Caco-2 (cell line): ENCODE measurements at regions of chr22 and their contacts with region 1.

Region 1: DNA sequence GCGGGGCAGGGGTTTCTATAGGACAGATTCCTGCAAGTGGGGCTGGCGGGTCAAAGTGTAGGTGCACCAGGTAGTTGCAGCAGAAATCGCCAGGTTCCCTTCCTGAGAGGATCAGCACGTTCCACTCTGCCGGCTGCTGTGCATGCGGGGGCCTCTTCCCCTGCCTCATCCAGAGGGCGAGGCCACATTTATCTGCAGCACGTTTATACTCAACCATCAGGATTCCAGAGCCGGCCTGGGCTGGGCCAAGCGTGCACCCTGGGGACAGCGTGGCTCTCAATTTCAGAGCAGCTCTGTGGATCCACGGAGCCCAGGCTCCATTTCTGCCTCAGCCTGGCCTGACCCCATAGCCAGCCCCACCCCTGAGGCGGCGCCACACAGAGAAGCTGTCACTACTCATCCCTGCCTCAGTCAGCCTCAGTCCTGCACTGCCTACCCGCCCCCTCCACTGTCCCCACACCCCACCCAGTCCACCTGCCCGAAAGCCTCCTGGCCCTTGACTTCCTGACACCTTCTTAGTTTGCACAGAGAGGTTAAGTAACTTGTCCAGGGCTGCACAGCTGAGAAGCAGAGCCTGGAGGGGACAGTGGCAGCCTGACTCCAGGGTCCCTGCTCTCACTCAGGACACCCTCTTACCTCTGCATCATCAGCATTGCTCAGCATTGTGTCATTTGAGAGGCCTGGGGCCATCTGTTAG is 45.9 kb upstream of the RTL6 start:
- DNase-seq: peak; percentile 39 to 54
- H3K4me3 ChIP-seq: peak overlapping the region; percentile 22
- H3K4me3 Mint-ChIP-seq: peak overlapping the region; percentile 37
- H3K27ac Mint-ChIP-seq: no peak overlapping the region
- H3K4me1 ChIP-seq: peaks cover 3% of the 10 kb centered on the region; the same call in 1 of the 2 replicates
- H3K4me1 Mint-ChIP-seq: no peaks in the 10 kb centered on the region
- H3K27me3 ChIP-seq: no peaks in the 10 kb centered on the region
- H3K27me3 Mint-ChIP-seq: peaks cover 5% of the 10 kb centered on the region
- CTCF ChIP-seq: no peak

Region 2: DNA sequence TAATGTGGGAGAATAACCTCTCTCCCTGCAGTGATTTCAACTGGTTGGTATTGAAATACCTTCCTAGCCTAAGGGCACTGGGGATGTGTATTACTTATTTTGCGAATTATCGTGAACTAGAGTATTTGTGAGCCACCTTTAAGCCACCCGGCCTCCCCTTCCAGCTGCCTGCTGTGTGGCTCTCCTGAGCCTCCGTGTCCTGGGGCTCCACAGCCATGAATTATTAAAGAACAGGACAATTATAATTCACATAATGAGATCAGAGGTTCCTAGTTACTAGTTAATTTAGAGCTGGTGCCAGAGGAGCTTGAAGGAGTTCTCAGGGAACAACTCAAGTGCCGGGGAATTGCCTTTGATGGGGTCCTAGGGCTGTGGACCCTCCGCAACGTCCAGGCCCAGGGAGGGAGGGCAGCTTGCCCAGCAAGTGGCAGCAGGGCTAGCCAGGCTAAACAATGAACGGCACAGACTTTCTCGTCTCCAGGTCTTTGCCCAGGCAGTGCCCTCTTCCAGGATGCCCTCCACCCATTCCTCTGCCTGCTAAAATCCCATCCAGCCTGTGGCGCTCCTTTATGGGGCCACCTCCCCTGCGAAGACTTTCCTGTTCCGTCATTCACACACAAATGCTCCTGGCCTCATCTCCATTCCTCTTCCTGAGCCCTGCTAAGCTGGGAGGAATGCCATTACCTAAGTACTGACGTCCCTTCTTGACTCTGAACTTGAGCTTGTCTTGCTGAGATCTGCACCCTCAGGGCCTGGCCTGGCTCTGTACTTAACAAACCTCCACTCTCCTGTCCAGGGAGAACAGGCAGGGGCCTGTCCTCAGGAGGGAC is 137.4 kb before region 1 on chr22:
- CTCF ChIA-PET with region 1: no interaction called
- POLR2A ChIA-PET with region 1: no interaction called
- intact Hi-C with region 1: no loop called
- DNase-seq: peak in 1 of 2 experiments; percentile 11
- H3K4me3 ChIP-seq: no peak overlapping the region
- H3K4me3 Mint-ChIP-seq: no peak overlapping the region
- H3K27ac Mint-ChIP-seq: no peak overlapping the region
- H3K4me1 ChIP-seq: no peaks in the 10 kb centered on the region
- H3K4me1 Mint-ChIP-seq: no peaks in the 10 kb centered on the region
- H3K27me3 ChIP-seq: no peaks in the 10 kb centered on the region
- H3K27me3 Mint-ChIP-seq: peaks cover 20% of the 10 kb centered on the region
- CTCF ChIP-seq: no peak

Region 3: GRCh38 chr22:44505796-44506354 is 38.1 kb before region 1 on chr22:
- CTCF ChIA-PET with region 1: no interaction called
- POLR2A ChIA-PET with region 1: no interaction called
- intact Hi-C with region 1: loop called (anchors 1 kb)
- DNase-seq: no peak
- H3K4me3 ChIP-seq: no peak overlapping the region
- H3K4me3 Mint-ChIP-seq: no peak overlapping the region
- H3K27ac Mint-ChIP-seq: no peak overlapping the region
- H3K4me1 ChIP-seq: no peaks in the 10 kb centered on the region
- H3K4me1 Mint-ChIP-seq: no peaks in the 10 kb centered on the region
- H3K27me3 ChIP-seq: no peaks in the 10 kb centered on the region
- H3K27me3 Mint-ChIP-seq: peaks cover 7% of the 10 kb centered on the region
- CTCF ChIP-seq: no peak